ENCODE measurements at regions of chr3 and their contacts with region 1.

Region 1: GRCh38 chr3:50227390-50228183 is 8.4 kb upstream of the GNAI2 start:
- DNase-seq: peak; percentile 92
- H3K4me3 Mint-ChIP-seq: peak overlapping the region; percentile 96
- H3K27ac Mint-ChIP-seq: peak overlapping the region; percentile 91
- H3K4me1 Mint-ChIP-seq: peaks cover 18% of the 10 kb centered on the region
- H3K27me3 Mint-ChIP-seq: no peaks in the 10 kb centered on the region

Region 2: GRCh38 chr3:49539659-49540560 is 687.7 kb before region 1 on chr3:
- CTCF ChIA-PET with region 1: no interaction called
- intact Hi-C with region 1: loop called (anchors 1 kb)
- DNase-seq: peak; percentile 93
- H3K4me3 Mint-ChIP-seq: peak overlapping the region; percentile 69
- H3K27ac Mint-ChIP-seq: no peak overlapping the region
- H3K4me1 Mint-ChIP-seq: peaks cover 2% of the 10 kb centered on the region
- H3K27me3 Mint-ChIP-seq: no peaks in the 10 kb centered on the region

Region 3: GRCh38 chr3:50121416-50122032 is 106.1 kb before region 1 on chr3:
- CTCF ChIA-PET with region 1: interaction called, 10 read pairs
- intact Hi-C with region 1: loop called (anchors 1 kb)
- DNase-seq: peak; percentile 86
- H3K4me3 Mint-ChIP-seq: no peak overlapping the region
- H3K27ac Mint-ChIP-seq: no peak overlapping the region
- H3K4me1 Mint-ChIP-seq: no peaks in the 10 kb centered on the region
- H3K27me3 Mint-ChIP-seq: no peaks in the 10 kb centered on the region

Region 4: GRCh38 chr3:50245831-50246516 is 18.4 kb after region 1 on chr3:
- CTCF ChIA-PET with region 1: interaction called, 119 read pairs
- intact Hi-C with region 1: loop called (anchors 1 kb)
- DNase-seq: peak; percentile 97
- H3K4me3 Mint-ChIP-seq: peak overlapping the region; percentile 81
- H3K27ac Mint-ChIP-seq: peak overlapping the region; percentile 95
- H3K4me1 Mint-ChIP-seq: peaks cover 82% of the 10 kb centered on the region
- H3K27me3 Mint-ChIP-seq: no peaks in the 10 kb centered on the region

Region 5: DNA sequence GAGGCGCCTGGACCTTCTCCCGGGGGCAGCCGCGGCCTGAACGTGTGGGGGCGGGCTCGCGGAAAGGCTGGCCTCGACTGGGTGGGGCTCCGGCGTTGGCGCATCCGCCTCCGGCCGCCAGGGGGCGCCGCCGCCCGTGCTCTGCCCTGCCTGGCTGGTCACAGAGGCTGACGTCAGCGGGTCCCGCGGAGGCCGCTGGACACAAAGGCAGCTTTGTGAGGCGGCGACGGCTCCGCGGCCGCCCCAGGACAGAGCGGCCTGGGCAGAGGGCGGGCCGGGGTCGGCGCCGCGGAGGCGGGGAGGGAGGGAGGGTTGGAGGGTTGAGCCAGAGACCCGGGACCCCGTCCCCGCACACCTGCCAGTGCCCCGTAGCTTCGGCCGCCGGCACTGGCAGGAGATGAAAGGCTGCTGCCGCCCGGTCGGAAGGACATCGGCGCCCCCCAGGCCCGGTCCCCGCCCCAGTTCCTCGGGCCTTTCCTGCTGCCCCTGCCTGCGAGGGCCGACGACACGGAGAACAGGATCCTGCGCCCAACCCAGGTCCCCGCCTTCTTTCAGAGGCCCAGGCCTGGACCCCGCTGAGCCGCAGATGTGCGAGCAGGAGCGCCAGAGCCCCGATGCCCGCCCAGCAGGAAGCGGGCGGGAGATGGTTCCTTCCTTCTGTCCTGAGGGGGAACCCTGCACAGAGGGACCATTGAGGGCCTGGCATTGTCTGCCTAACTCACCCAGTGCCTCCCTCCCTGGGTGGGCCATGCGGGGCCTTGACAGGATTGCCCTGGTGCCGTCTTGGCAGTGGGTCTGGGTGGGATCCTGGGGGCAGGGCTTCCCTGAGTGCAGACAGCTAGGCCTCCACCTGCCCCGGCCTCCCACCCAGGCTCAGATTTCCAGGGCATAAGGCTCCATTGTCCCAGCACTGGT is 32.7 kb after region 1 on chr3:
- CTCF ChIA-PET with region 1: interaction called, 11 read pairs
- intact Hi-C with region 1: loop called (anchors 1 kb)
- DNase-seq: peak; percentile 88
- H3K4me3 Mint-ChIP-seq: peak overlapping the region; percentile 66
- H3K27ac Mint-ChIP-seq: peak overlapping the region; percentile 69
- H3K4me1 Mint-ChIP-seq: peaks cover 4% of the 10 kb centered on the region
- H3K27me3 Mint-ChIP-seq: no peaks in the 10 kb centered on the region

Region 6: DNA sequence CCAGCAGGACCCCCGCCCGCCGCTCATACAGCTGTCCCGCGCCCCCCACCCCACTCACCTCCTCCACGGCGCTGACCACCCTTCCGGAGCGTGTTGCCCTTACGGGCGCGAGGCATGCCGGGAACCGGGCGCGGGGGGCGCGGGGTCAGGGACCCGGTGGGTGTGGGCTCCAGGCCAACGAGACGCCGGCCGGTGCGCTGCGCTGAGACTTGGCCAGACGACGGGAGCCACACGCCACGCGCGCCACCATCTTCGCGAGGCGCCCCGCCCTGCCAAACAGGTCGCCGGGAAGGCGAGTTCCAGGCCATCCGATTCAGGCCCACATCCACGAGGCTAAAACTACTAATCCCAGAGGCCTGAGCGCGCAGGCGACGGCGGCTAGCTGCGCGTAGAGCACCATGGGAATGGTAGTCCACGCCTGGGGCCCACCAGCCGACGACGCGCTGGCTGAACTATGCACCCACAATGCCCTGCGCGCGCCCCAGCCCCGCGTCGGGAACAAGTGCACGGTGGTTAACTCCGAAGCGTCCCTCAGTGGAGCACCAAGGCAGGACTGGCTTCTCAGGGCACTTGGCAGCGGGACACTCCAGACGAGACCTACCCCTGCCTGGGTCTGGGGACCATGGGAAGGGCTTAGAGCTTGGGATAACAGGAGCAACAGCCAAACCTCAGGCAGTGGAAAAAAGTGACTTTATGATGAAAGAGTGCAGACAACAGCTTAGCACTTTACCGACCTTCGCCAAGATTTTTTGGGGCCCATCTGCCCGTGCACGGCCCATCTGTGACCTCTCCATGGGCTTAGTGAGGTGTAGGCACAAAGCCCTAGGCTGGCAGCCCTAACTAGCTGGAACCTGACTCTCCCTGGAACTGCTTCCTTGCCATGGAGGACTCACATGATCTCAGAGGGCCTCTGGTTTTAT is 64.8 kb after region 1 on chr3 and contains the start of gene IFRD2:
- CTCF ChIA-PET with region 1: interaction called, 8 read pairs
- intact Hi-C with region 1: loop called (anchors 1 kb)
- DNase-seq: peak; percentile 98
- H3K4me3 Mint-ChIP-seq: peak within 1 kb of the TSS; percentile 91
- H3K27ac Mint-ChIP-seq: peak within 1 kb of the TSS; percentile 88
- H3K4me1 Mint-ChIP-seq: peaks cover 24% of the 10 kb centered on the region
- H3K27me3 Mint-ChIP-seq: no peaks in the 10 kb centered on the region
- total RNA-seq, gene IFRD2: 117 to 125 TPM

Measured in activated naive CD4-positive, alpha-beta T cell treated with anti-CD3 and anti-CD28 coated beads for 36 hours (primary cell).